ENCODE measurements at regions of chr11 and their contacts with region 1.

Region 1: GRCh38 chr11:77127232-77127911 is 674 bp upstream of the MYO7A start:
- DNase-seq: peak; percentile 56
- H3K4me3 Mint-ChIP-seq: peak overlapping the region; percentile 39
- H3K27ac Mint-ChIP-seq: no peak overlapping the region
- H3K4me1 Mint-ChIP-seq: peaks cover 4% of the 10 kb centered on the region
- H3K27me3 Mint-ChIP-seq: peaks cover 3% of the 10 kb centered on the region

Region 2: GRCh38 chr11:77066229-77067042 is 60.9 kb before region 1 on chr11 and contains the start of gene CAPN5:
- CTCF ChIA-PET with region 1: no interaction called
- POLR2A ChIA-PET with region 1: no interaction called
- DNase-seq: peak; percentile 81
- H3K4me3 Mint-ChIP-seq: peak within 1 kb of the TSS; percentile 67
- H3K27ac Mint-ChIP-seq: no peak within 1 kb of the TSS
- H3K4me1 Mint-ChIP-seq: peaks cover 4% of the 10 kb centered on the region
- H3K27me3 Mint-ChIP-seq: peaks cover 32% of the 10 kb centered on the region
- total RNA-seq, gene CAPN5: 0.43 to 0.65 TPM

Region 3: GRCh38 chr11:77140231-77140851 is 13.0 kb after region 1 on chr11:
- CTCF ChIA-PET with region 1: interaction called, 14 read pairs
- POLR2A ChIA-PET with region 1: no interaction called
- DNase-seq: no peak
- H3K4me3 Mint-ChIP-seq: no peak overlapping the region
- H3K27ac Mint-ChIP-seq: no peak overlapping the region
- H3K4me1 Mint-ChIP-seq: peaks cover 28% of the 10 kb centered on the region
- H3K27me3 Mint-ChIP-seq: peaks cover 24% of the 10 kb centered on the region

Region 4: DNA sequence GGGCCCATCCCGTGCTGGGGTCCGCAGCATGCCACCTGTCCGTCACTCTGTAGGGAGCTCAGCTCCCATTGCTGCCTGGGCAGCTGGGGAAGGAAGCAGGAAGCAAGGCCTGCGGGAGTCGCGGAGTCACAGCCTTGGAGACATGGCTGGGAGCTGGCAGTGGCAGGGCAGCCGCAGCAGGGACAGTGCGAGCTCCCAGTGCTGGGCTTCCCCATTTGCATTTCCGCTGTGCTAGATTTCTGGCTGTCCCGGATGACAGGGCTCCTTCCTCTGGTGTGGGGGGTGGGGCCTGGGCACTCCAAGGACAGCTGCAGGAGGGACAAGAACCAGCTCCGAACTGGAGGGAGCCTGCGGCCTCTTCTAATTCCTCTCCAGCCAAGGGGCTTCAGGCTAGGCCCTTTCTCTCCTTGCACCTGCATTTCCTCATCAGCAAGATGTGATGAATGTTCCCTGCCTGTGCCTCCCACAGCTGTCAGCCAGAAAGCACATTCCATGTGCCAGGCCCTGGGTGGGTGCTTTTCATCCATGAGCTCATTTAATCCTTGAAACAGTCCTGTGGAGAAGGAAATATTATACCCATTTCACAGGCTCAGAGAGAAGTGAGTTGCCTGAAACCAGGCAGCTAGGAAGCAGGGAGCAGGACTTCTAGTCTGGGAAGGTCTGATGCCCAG is 48.6 kb after region 1 on chr11:
- CTCF ChIA-PET with region 1: interaction called, 11 read pairs
- POLR2A ChIA-PET with region 1: no interaction called
- DNase-seq: no peak
- H3K4me3 Mint-ChIP-seq: no peak overlapping the region
- H3K27ac Mint-ChIP-seq: no peak overlapping the region
- H3K4me1 Mint-ChIP-seq: no peaks in the 10 kb centered on the region
- H3K27me3 Mint-ChIP-seq: no peaks in the 10 kb centered on the region

Region 5: GRCh38 chr11:77244243-77245027 is 117.1 kb after region 1 on chr11:
- CTCF ChIA-PET with region 1: no interaction called
- POLR2A ChIA-PET with region 1: no interaction called
- DNase-seq: no peak
- H3K4me3 Mint-ChIP-seq: no peak overlapping the region
- H3K27ac Mint-ChIP-seq: no peak overlapping the region
- H3K4me1 Mint-ChIP-seq: peaks cover 6% of the 10 kb centered on the region
- H3K27me3 Mint-ChIP-seq: peaks cover 7% of the 10 kb centered on the region

Region 6: GRCh38 chr11:77547863-77548551 is 420.6 kb after region 1 on chr11:
- CTCF ChIA-PET with region 1: interaction called, 16 read pairs
- POLR2A ChIA-PET with region 1: no interaction called
- DNase-seq: peak; percentile 18
- H3K4me3 Mint-ChIP-seq: no peak overlapping the region
- H3K27ac Mint-ChIP-seq: no peak overlapping the region
- H3K4me1 Mint-ChIP-seq: peaks cover 4% of the 10 kb centered on the region
- H3K27me3 Mint-ChIP-seq: no peaks in the 10 kb centered on the region